AG04450 (cell line): ENCODE measurements at regions of chr2 and their contacts with region 1.

Region 1: DNA sequence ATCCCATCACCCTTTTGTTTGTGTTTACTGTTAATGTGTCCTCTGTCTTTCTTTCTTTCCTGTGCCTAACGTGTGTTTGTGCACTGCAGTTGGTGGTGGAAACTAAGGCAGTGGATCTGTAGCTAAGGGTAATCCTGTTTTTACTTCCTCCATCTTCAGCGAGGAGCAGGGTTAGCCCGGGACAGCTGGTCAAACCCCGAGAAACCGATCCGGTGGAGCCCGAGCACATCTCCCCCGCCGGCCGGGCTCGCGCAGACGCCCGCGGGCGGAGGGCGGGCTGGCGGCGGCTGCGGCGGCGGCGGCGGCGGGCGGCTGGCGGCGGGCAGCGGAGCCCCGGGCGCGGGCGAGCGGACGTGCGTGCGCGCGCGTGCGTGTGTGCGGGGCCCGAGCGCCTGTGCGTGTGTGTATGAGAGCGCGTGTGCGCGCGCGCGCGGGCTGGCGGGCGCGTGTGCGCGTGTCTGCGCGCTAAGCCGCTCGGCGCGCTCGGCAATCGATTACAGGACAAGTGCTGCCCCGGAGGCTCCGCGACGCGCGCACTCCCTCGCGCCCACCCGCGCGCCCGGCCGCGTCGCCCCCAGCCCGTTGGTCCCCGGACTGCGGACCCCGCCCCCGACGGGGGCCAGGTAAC is at the start of gene IKZF2:
- DNase-seq: peak; percentile 80
- H3K4me3 ChIP-seq: peak within 1 kb of the TSS; percentile 80
- H3K27ac ChIP-seq: peak within 1 kb of the TSS; percentile 74
- H3K27me3 ChIP-seq: no peaks in the 10 kb centered on the region
- CTCF ChIP-seq: no peak
- polyA plus RNA-seq, gene IKZF2: 5.6 and 7.1 TPM in 2 replicates

Region 2: DNA sequence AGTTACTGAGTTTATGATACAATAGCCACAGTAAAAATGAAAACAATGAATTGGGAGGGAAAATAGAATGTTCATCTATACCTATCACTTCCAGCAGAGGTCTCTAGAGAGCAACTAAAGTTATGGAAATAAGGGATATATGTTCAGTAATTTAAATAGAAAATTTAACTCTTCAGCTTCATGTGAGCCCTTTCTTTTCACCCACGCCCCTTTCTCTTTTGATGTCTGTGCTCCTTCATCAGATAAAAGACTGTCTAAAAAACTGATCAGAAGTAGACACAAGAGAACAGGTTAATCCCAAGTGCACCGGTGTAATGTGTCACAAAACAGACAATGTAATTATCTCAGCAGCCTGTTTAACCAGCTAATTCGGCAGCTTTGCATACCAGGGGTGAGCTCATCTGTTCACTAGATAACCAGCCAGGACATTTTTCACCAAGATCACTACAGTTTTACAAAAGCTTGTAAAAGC is 374.5 kb before region 1 on chr2:
- CTCF ChIA-PET with region 1: interaction called, 122 read pairs
- POLR2A ChIA-PET with region 1: interaction called, 4 read pairs
- DNase-seq: no peak
- H3K4me3 ChIP-seq: no peak overlapping the region
- H3K27ac ChIP-seq: no peak overlapping the region
- H3K27me3 ChIP-seq: no peaks in the 10 kb centered on the region
- CTCF ChIP-seq: peak; percentile 66

Region 3: DNA sequence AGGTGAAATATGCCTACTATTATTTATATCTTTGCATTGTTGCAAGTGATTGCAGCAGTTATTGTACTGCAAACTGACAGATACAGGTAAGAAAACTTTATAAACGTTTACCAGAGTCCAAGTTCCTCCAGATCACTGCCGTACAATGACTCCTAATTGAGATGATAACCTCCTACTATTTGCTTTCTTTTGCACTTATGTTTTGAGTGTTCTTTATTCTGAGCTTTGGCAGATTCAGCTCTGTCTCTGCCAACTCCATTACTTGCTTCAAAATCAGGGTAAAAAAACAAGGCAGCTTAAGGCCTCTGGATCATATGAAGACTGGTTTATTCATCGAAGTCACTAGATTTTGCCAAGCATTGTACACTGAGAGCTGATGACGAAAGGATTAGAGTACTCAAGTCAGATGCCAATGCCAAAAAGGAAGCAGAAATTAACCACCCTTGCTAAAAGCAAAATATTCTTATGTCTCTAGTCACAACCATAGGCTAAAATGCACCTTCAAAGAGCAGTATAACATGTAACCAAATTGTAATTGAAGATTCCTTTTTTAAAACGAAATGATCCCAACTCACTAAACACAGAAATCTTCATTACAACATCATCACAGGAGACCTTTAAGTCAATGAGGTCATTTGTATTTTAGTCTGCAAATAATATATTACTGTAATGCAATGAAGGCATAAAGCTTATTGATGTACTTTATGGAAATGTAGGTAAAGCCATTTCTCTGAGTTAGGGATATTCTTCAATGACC is 10.4 kb after region 1 on chr2:
- CTCF ChIA-PET with region 1: interaction called, 13 read pairs
- POLR2A ChIA-PET with region 1: interaction called, 3 read pairs
- DNase-seq: no peak
- H3K4me3 ChIP-seq: peak overlapping the region; percentile 5; the same call in 1 of the 2 replicates
- H3K27ac ChIP-seq: peak overlapping the region; percentile 77
- H3K27me3 ChIP-seq: no peaks in the 10 kb centered on the region
- CTCF ChIP-seq: no peak

Region 4: GRCh38 chr2:213490087-213490486 is 338.5 kb after region 1 on chr2:
- CTCF ChIA-PET with region 1: interaction called, 10 read pairs
- POLR2A ChIA-PET with region 1: no interaction called
- DNase-seq: no peak
- H3K4me3 ChIP-seq: no peak overlapping the region
- H3K27ac ChIP-seq: no peak overlapping the region
- H3K27me3 ChIP-seq: no peaks in the 10 kb centered on the region
- CTCF ChIP-seq: no peak